Ovary (tissue), 10 donors: ENCODE measurements at regions of chr12 and their contacts with region 1.

Region 1: DNA sequence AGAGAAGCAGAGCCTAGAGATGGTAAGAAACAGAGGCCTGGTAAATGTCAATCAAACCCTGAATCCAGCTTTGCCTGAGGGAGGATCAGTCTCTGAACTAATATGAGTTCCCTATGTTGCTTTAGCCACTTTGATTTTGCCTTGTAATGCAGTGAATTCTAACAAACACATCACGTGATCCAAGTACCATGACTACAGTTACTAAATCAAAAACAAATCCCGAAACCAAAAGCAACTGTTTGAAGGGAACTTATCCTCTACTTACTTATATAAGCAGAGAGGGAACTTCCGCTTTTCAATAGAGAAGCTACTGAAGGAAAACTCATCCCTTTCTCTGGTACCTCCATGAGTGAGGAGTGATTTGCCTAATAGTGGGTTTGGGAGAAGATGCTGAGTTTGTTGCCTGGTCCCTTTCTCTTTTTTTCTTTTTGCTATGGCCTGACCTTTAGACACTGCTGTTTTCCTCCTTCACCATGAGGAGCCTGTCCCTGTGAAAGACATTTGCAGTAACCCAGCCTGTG is 7.7 kb upstream of the PPTC7 start:
- DNase-seq: no peak
- H3K4me3 ChIP-seq: no peak overlapping the region
- H3K27ac ChIP-seq: peak overlapping the region; percentile 37 to 73
- H3K4me1 ChIP-seq: peaks cover 8% of the 10 kb centered on the region
- H3K27me3 ChIP-seq: no peaks in the 10 kb centered on the region
- CTCF ChIP-seq: no peak
- EP300 ChIP-seq: no peak
- POLR2A ChIP-seq: peak; percentile 22

Region 2: GRCh38 chr12:110543252-110543959 is 47.5 kb before region 1 on chr12:
- intact Hi-C with region 1: loop called in 1 of 4 experiments (anchors 10 kb)
- DNase-seq: peak; percentile 93 to 96 (median 94)
- H3K4me3 ChIP-seq: no peak overlapping the region
- H3K27ac ChIP-seq: peak overlapping the region; percentile 24 to 74
- H3K4me1 ChIP-seq: peaks cover 7% of the 10 kb centered on the region
- H3K27me3 ChIP-seq: no peaks in the 10 kb centered on the region
- CTCF ChIP-seq: no peak
- EP300 ChIP-seq: no peak
- POLR2A ChIP-seq: no peak